ENCODE measurements at regions of chr17 and their contacts with region 1.

Region 1: DNA sequence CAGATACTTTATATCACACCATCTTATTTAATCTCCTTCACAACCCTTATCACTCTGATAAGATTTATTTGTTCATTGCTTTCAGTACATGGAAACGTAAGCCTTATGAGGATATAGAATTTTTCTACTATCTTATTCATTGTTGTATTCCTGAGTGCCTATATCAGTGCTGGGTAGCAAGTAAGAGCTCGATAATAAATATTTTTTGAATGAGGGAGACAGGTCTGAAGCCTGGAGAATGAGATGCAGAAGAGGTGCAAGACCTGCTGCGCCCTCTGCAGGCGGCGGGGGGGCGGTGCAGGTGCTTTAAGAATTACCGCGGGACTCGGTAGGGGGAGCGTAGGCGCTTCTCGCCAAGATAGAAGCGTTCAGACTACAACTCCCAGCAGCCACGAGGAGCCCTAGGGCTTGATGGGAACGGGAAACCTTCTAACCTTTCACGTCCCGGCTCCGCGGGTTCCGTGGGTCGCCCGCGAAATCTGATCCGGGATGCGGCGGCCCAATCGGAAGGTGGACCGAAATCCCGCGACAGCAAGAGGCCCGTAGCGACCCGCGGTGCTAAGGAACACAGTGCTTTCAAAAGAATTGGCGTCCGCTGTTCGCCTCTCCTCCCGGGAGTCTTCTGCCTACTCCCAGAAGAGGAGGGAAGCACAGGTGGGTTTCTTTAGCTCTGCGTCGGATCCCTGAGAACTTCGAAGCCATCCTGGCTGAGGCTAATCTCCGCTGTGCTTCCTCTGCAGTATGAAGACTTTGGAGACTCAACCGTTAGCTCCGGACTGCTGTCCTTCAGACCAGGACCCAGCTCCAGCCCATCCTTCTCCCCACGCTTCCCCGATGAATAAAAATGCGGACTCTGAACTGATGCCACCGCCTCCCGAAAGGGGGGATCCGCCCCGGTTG is at the start of gene WRAP53:
- DNase-seq: peak; percentile 98 to 99
- ATAC-seq: peak; percentile 85 to 91
- H3K4me3 ChIP-seq: peak within 1 kb of the TSS; percentile 77
- H3K27ac ChIP-seq: peak within 1 kb of the TSS; percentile 94 to 95
- H3K4me1 ChIP-seq: peaks cover 23% of the 10 kb centered on the region
- CTCF ChIP-seq: peak; percentile 99
- EP300 ChIP-seq: no peak
- POLR2A ChIP-seq: peak; percentile 66
- RAD21 ChIP-seq: peak; percentile 86
- polyA plus RNA-seq, gene WRAP53: 15.9 and 17.4 TPM in 2 replicates

Region 2: GRCh38 chr17:7403977-7404736 is 284.0 kb before region 1 on chr17 and contains the start of gene TMEM256:
- CTCF ChIA-PET with region 1: no interaction called
- POLR2A ChIA-PET with region 1: interaction called, 14 read pairs
- DNase-seq: peak; percentile 98 to 100
- ATAC-seq: peak; percentile 85 to 97
- H3K4me3 ChIP-seq: peak within 1 kb of the TSS; percentile 88
- H3K27ac ChIP-seq: peak within 1 kb of the TSS; percentile 81 to 92
- H3K4me1 ChIP-seq: peaks cover 28% of the 10 kb centered on the region
- CTCF ChIP-seq: no peak
- EP300 ChIP-seq: no peak
- POLR2A ChIP-seq: peak; percentile 88
- RAD21 ChIP-seq: no peak
- polyA plus RNA-seq, gene TMEM256: 127 and 210 TPM in 2 replicates

Region 3: GRCh38 chr17:7548585-7549400 is 139.4 kb before region 1 on chr17 and contains the start of gene TNFSF12:
- CTCF ChIA-PET with region 1: no interaction called
- POLR2A ChIA-PET with region 1: no interaction called
- DNase-seq: peak in 1 of 2 experiments; percentile 42
- ATAC-seq: peak; percentile 89
- H3K4me3 ChIP-seq: peak within 1 kb of the TSS; percentile 63
- H3K27ac ChIP-seq: peak within 1 kb of the TSS; percentile 81 to 90
- H3K4me1 ChIP-seq: peaks cover 17% of the 10 kb centered on the region
- CTCF ChIP-seq: peak; percentile 19; the same call in 1 of the 3 replicates
- EP300 ChIP-seq: no peak
- POLR2A ChIP-seq: peak; percentile 82
- RAD21 ChIP-seq: no peak
- polyA plus RNA-seq, gene TNFSF12: 11.9 and 12.4 TPM in 2 replicates

Region 4: GRCh38 chr17:7583253-7584109 is 104.7 kb before region 1 on chr17 and contains the start of gene MPDU1:
- CTCF ChIA-PET with region 1: interaction called, 184 read pairs
- POLR2A ChIA-PET with region 1: interaction called, 97 read pairs
- DNase-seq: peak; percentile 89 to 97
- ATAC-seq: peak; percentile 35 to 68
- H3K4me3 ChIP-seq: peak within 1 kb of the TSS; percentile 66
- H3K27ac ChIP-seq: peak within 1 kb of the TSS; percentile 91 to 96
- H3K4me1 ChIP-seq: peaks cover 50% of the 10 kb centered on the region
- CTCF ChIP-seq: no peak
- EP300 ChIP-seq: no peak
- POLR2A ChIP-seq: peak; percentile 74
- RAD21 ChIP-seq: no peak
- polyA plus RNA-seq, gene MPDU1: 148 and 204 TPM in 2 replicates

Region 5: DNA sequence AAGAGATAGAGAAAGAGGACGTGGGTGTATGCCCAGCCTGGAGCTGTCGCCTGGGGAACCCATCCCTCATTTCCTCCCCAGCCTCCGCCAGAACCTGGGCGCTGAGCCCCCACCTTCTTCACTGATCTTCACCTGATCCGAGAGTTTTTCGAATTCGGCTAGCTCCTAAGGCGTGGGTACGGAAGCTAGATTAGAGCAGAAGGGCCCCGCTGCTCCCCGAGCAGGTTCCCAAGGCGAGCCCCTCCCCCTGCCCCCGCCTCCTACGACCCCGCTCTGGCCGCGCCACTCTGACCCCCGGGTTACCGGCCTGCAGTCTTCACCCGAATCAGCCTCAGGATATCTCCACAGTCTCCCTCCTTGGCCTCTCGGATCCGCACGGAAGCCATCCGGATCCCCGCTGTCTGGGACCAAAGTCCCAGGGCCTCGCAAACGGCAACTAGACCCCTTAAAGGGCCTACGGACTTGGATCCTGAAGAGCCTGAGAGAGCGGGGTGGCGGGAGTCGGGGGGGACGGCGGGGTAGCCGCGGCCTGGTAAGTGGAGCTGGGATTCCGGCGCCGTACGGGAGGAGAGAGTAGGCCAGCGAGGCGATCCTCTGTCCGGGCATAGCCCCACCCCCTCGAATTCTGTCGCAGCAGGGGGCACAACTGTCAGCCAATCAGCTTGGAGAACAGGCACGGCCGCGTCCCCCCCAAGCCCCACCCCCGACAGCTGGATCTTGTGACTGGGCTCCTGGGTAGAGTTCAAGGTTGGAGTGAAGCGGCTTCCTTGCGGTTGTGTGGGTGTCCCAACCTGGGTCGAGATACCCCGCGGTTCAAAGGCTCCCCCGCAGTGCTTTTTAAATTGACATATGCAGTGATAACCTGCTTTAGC is 60.7 kb before region 1 on chr17 and contains the start of gene SAT2:
- CTCF ChIA-PET with region 1: interaction called, 191 read pairs
- POLR2A ChIA-PET with region 1: interaction called, 81 read pairs
- DNase-seq: peak; percentile 94 to 99
- ATAC-seq: peak; percentile 91 to 94
- H3K4me3 ChIP-seq: peak within 1 kb of the TSS; percentile 85
- H3K27ac ChIP-seq: peak within 1 kb of the TSS; percentile 93 to 94
- H3K4me1 ChIP-seq: peaks cover 10% of the 10 kb centered on the region; the same call in 2 of the 3 replicates
- CTCF ChIP-seq: no peak
- EP300 ChIP-seq: no peak
- POLR2A ChIP-seq: peak; percentile 77
- RAD21 ChIP-seq: 0 out of 5 replicates have a peak, but pooled peaks of 1 of the 2 experiments have one; percentile 17
- polyA plus RNA-seq, gene SAT2: 38.1 and 44.4 TPM in 2 replicates

Region 6: GRCh38 chr17:7650509-7651096 is 37.6 kb before region 1 on chr17 and contains the start of gene ATP1B2:
- CTCF ChIA-PET with region 1: interaction called, 22 read pairs
- POLR2A ChIA-PET with region 1: interaction called, 32 read pairs
- DNase-seq: peak; percentile 59 to 90
- ATAC-seq: peak; percentile 63 to 85
- H3K4me3 ChIP-seq: peak within 1 kb of the TSS; percentile 59
- H3K27ac ChIP-seq: peak within 1 kb of the TSS in 1 of 2 experiments; percentile 58; a peak in 4 of 6 replicates
- H3K4me1 ChIP-seq: peaks cover 16% of the 10 kb centered on the region; the same call in 1 of the 3 replicates
- CTCF ChIP-seq: no peak
- EP300 ChIP-seq: no peak
- POLR2A ChIP-seq: no peak
- RAD21 ChIP-seq: no peak
- polyA plus RNA-seq, gene ATP1B2: 0.16 and 0.20 TPM in 2 replicates

Region 7: DNA sequence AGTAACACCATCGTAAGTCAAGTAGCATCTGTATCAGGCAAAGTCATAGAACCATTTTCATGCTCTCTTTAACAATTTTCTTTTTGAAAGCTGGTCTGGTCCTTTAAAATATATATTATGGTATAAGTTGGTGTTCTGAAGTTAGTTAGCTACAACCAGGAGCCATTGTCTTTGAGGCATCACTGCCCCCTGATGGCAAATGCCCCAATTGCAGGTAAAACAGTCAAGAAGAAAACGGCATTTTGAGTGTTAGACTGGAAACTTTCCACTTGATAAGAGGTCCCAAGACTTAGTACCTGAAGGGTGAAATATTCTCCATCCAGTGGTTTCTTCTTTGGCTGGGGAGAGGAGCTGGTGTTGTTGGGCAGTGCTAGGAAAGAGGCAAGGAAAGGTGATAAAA is 14.9 kb before region 1 on chr17:
- CTCF ChIA-PET with region 1: interaction called, 107 read pairs
- POLR2A ChIA-PET with region 1: interaction called, 40 read pairs
- DNase-seq: peak in 1 of 2 experiments; percentile 64
- ATAC-seq: peak in 1 of 2 experiments; percentile 27; a peak in 2 of 6 replicates
- H3K4me3 ChIP-seq: no peak overlapping the region
- H3K27ac ChIP-seq: no peak overlapping the region
- H3K4me1 ChIP-seq: no peaks in the 10 kb centered on the region
- CTCF ChIP-seq: peak; percentile 47
- EP300 ChIP-seq: no peak
- POLR2A ChIP-seq: no peak
- RAD21 ChIP-seq: peak; percentile 43 to 59

Region 8: DNA sequence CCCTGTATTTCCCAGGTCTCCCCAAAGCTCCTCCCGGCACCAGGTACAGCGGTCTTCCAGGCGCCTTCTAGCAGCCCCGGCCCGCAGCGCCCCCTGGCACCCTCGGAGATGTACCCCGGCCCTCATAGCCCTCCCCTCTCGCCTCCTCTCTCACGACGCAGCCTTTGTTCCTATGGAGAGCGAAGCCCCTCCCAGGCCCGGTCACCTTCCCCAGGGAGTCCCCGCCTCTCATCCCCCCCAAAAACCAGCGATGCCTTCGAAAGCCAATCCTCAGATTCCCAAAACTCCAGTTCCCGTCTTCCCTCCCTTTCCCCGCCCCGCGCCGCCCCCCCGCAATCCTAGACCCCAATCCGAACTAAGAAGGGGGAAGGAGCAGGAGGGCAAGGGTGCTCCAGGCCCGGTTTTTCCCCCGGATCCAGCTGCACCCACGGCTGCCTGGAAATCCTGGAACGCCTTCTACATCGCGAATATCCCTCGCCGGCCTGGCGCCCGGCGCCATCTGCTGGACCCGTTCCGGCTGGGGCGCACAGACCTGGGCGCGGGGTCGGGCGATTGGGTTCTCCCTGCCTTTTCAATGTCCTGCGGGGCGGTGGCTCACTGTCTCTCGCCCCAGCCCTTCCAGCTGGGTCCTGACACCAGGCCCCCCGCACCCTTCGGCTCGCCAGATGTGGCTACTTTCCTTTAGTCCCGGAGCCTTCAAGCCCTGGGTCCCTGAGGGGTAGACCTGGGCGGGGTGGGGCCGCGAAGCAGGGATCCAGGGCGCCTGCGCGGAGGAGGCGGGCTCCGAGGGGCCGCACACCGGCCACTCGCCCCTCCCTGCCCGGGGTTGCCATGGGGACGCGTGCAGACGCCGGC is 29.0 kb after region 1 on chr17 and contains the start of gene DNAH2:
- CTCF ChIA-PET with region 1: interaction called, 51 read pairs
- POLR2A ChIA-PET with region 1: interaction called, 18 read pairs
- DNase-seq: peak; percentile 93 to 94
- ATAC-seq: peak; percentile 85 to 94
- H3K4me3 ChIP-seq: peak within 1 kb of the TSS; percentile 52
- H3K27ac ChIP-seq: peak within 1 kb of the TSS; percentile 79 to 89
- H3K4me1 ChIP-seq: peaks cover 21% of the 10 kb centered on the region
- CTCF ChIP-seq: peak; percentile 78
- EP300 ChIP-seq: no peak
- POLR2A ChIP-seq: peak; percentile 62
- RAD21 ChIP-seq: peak; percentile 68 to 75
- polyA plus RNA-seq, gene DNAH2: 0.08 TPM in 2 replicates

Region 9: GRCh38 chr17:7737601-7738000 is 49.4 kb after region 1 on chr17:
- CTCF ChIA-PET with region 1: no interaction called
- POLR2A ChIA-PET with region 1: no interaction called
- DNase-seq: no peak
- ATAC-seq: no peak
- H3K4me3 ChIP-seq: no peak overlapping the region
- H3K27ac ChIP-seq: no peak overlapping the region
- H3K4me1 ChIP-seq: no peaks in the 10 kb centered on the region
- CTCF ChIP-seq: no peak
- EP300 ChIP-seq: no peak
- POLR2A ChIP-seq: no peak
- RAD21 ChIP-seq: no peak

Region 10: DNA sequence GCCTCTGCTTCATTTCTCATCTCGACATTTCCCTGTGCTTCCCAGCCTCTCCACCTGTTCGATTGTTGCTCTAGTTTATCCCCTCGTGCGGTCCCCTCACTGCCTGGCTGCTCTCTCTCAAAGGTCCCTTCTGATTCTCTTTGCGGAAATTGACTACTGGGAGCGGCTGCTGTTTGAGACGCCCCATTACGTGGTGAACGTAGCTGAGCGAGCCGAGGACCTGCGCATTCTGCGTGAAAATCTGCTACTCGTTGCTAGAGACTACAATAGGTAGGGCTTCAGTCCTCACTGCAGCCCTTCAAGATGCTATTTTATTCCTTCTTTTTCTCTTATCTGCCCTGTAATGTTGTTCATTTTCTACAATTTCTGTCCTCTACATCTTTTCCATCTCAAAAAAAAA is 68.8 kb after region 1 on chr17:
- CTCF ChIA-PET with region 1: no interaction called
- POLR2A ChIA-PET with region 1: no interaction called
- DNase-seq: no peak
- ATAC-seq: no peak
- H3K4me3 ChIP-seq: no peak overlapping the region
- H3K27ac ChIP-seq: no peak overlapping the region
- H3K4me1 ChIP-seq: peaks cover 7% of the 10 kb centered on the region; the same call in 2 of the 3 replicates
- CTCF ChIP-seq: no peak
- EP300 ChIP-seq: no peak
- POLR2A ChIP-seq: no peak
- RAD21 ChIP-seq: no peak

Measured in A549 (cell line).